Activated T-helper 1 cell treated with anti-CD3 and anti-CD28 coated beads, Interleukin-12 subunit alpha, Interleukin-12 subunit beta, Interleukin-2, Interleukin-4 antibody, amounts not matched to agents 30 ng/mL and 10 ng/mL and 1 ng/mL, durations not matched to agents 14 hours and 24 hours and 36 hours (primary cell): ENCODE measurements at regions of chr9 and their contacts with region 1.

Region 1: DNA sequence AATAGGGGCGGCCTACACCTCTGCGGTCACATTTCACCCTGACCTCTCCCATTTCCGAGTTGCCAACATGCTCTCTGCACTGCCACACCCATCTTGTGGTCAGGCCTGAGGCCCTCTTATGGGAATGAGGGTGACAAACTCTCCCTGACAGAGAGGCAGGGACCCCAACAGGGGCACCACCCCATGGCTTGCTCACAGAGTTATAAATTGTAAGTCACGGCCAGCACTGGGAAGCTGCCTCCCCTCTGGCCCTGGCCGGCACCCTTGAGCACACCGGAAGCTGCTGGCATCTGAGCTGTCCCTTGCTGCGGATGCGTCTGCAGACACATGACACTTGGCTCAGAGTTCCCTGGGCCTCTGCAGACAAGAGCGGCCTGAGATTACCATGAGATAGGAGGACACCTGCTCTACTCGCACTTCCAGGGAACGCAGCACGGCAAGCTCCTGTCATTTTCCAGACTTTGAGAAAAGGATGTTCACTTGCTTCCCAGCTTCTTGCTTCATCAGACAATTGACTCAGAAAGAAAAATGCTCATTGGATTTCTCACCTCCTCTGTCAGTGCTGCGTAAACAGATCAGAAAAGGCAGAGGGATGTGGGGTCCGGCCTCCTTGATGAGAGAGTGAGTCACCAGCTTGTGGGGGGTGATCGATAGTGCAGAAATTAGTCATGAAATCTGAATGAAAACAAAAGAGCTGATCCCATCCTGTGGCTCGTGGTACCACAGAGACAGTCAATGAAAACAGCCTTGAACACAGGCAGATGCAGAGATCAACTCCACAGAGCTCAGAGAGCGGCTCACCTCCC is 269.8 kb downstream of the SYK start:
- DNase-seq: peak; percentile 35
- H3K4me3 Mint-ChIP-seq: peak overlapping the region; percentile 68
- H3K27ac Mint-ChIP-seq: peak overlapping the region; percentile 96
- H3K4me1 Mint-ChIP-seq: peaks cover 17% of the 10 kb centered on the region
- H3K27me3 Mint-ChIP-seq: peaks cover 2% of the 10 kb centered on the region

Region 2: DNA sequence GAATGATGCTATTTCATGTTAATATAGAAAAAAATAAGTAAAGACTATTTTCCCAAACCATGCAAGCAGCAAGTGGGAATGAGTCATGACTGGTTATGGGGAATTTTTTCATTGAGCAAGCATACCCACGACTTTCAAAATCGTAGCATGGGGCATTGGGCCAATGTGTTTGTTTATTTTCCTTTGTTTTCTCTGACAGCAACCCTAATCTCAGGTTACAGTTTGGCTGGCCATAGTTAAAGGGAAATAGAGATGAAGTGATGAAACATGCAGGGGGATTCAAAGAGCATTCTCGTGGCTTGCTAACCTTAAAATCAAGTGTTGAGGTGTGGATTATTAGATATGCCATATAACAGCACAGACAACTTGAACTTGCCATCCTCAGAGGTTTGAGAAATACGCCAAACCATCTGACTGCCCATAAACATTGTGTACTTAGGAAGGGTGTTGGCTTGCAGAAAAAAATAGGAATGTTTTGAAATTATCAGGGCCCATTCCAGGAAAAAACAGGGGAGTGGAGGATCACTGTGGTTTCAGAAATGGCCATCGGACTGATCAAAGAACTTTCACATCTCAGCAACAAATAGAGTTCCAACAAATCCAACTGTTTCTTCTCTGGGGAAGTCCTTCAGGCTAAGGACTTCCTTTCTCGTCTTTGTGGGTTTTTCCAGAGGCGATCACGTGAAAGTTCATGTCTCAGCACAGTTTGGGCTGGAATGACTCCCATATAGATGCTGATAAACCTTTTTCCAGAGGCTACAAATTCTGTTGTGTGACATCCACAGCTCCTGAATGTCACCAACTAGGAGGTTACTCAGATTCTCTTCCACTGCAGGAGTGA is 10.7 kb before region 1 on chr9:
- intact Hi-C with region 1: loop called (anchors 1 kb)
- DNase-seq: no peak
- H3K4me3 Mint-ChIP-seq: peak overlapping the region; percentile 6
- H3K27ac Mint-ChIP-seq: peak overlapping the region; percentile 70
- H3K4me1 Mint-ChIP-seq: peaks cover 40% of the 10 kb centered on the region
- H3K27me3 Mint-ChIP-seq: peaks cover 2% of the 10 kb centered on the region

Region 3: GRCh38 chr9:91089405-91090129 is 18.2 kb after region 1 on chr9:
- intact Hi-C with region 1: loop called (anchors 1 kb)
- DNase-seq: no peak
- H3K4me3 Mint-ChIP-seq: no peak overlapping the region
- H3K27ac Mint-ChIP-seq: peak overlapping the region; percentile 71
- H3K4me1 Mint-ChIP-seq: peaks cover 54% of the 10 kb centered on the region
- H3K27me3 Mint-ChIP-seq: no peaks in the 10 kb centered on the region

Region 4: GRCh38 chr9:91101611-91102168 is 30.3 kb after region 1 on chr9:
- intact Hi-C with region 1: loop called (anchors 1 kb)
- DNase-seq: peak; percentile 85
- H3K4me3 Mint-ChIP-seq: peak overlapping the region; percentile 53
- H3K27ac Mint-ChIP-seq: peak overlapping the region; percentile 85
- H3K4me1 Mint-ChIP-seq: peaks cover 72% of the 10 kb centered on the region
- H3K27me3 Mint-ChIP-seq: peaks cover 8% of the 10 kb centered on the region

Region 5: DNA sequence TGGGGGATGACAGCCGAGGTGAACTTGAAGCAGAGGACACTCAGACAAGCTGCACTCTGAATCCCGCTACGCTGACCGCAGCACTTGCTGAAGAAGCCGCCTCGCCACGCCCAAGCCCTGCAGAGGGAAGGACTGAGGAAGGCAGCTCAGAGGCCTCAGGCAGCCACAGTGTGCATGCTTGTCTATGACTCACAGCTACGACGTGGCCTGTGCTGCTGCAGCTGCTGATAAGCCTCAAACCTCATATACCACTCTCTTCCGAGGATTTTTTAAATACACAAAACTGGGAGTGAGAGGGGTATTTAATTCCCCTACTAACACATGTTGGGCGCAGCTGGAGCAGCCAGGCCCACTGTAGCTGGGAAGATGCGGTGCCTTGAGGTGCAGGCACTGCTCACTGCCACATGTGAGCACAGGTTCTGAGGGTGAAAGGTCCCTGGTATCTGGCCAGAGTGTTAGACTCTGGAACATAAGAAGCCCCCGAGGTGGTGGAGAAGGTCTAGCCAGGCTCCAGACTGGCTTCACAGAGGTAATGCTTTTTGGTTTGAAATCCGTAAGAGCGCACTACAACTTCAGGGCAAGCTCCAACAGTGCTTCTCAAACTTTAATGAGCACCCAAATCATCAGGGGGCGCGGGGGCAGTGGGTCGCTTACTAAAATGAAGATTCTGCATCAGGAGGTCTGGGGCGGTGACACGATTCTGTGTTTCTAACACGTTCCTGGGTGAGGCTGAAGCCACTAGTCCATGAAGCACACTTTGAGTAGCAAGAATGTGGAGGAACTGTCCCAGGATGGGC is 93.5 kb after region 1 on chr9:
- intact Hi-C with region 1: loop called (anchors 1 kb)
- DNase-seq: peak; percentile 74
- H3K4me3 Mint-ChIP-seq: peak overlapping the region; percentile 82
- H3K27ac Mint-ChIP-seq: peak overlapping the region; percentile 98
- H3K4me1 Mint-ChIP-seq: peaks cover 62% of the 10 kb centered on the region
- H3K27me3 Mint-ChIP-seq: no peaks in the 10 kb centered on the region